ENCODE measurements at regions of chr12 and their contacts with region 1.

Region 1: DNA sequence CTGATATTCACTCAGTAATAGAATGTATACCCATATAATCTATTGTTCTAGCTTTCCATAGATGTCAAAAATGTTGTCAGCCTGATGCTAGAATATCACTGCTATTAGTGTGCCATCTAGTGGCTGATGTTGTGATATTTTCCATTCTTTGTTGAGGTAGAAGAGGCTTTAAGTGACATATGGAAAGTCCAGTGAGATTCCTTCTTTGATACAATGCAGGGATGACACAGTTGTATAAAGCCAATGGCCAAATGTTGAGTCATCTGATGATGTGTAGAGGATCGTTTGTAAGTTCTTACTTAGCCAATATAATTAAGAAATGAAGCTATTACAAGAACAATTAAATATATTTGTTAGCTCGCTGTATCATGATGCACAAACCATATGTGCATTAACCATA is 58.1 kb upstream of the PCED1B start:
- DNase-seq: peak; percentile 86
- H3K4me3 Mint-ChIP-seq: no peak overlapping the region
- H3K27ac Mint-ChIP-seq: no peak overlapping the region
- H3K4me1 Mint-ChIP-seq: peaks cover 34% of the 10 kb centered on the region
- H3K27me3 Mint-ChIP-seq: no peaks in the 10 kb centered on the region
- CTCF ChIP-seq: peak; percentile 57

Region 2: GRCh38 chr12:46071769-46072624 is 949.3 kb before region 1 on chr12:
- CTCF ChIA-PET with region 1: interaction called, 7 read pairs
- POLR2A ChIA-PET with region 1: interaction called, 3 read pairs
- intact Hi-C with region 1: loop called (anchors 1 kb)
- DNase-seq: peak; percentile 87
- H3K4me3 Mint-ChIP-seq: no peak overlapping the region
- H3K27ac Mint-ChIP-seq: peak overlapping the region; percentile 47
- H3K4me1 Mint-ChIP-seq: peaks cover 20% of the 10 kb centered on the region
- H3K27me3 Mint-ChIP-seq: no peaks in the 10 kb centered on the region
- CTCF ChIP-seq: peak; percentile 95

Region 3: DNA sequence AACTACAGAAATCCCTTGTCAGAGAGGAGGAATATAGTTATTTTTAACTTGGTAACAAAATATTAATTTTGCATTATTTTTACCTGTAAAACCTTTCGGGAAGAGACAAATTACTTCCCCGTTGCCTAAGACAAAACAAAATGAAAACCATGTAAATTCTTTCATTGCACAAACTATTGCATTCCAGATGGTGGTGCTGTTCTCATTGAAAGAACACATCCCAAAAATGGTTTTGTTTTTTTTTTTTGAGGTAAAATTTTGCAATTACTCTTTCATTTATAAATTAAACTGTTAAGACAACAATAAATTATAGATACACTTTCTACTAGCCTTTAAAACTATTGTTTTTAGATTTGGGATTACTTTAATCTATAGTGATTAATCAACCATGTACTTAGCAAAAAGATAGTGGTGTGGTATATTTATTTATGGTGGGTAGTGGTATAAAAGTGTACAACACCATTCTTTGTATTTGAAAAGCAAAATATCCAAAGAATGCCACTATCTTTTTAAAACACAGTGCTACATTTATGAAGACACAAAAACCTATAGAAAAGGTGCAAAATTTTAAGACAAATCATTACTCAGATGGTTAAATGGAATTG is 867.9 kb before region 1 on chr12:
- CTCF ChIA-PET with region 1: interaction called, 4 read pairs
- POLR2A ChIA-PET with region 1: no interaction called
- intact Hi-C with region 1: loop called (anchors 2 kb)
- DNase-seq: peak; percentile 46
- H3K4me3 Mint-ChIP-seq: no peak overlapping the region
- H3K27ac Mint-ChIP-seq: no peak overlapping the region
- H3K4me1 Mint-ChIP-seq: peaks cover 5% of the 10 kb centered on the region
- H3K27me3 Mint-ChIP-seq: no peaks in the 10 kb centered on the region
- CTCF ChIP-seq: peak; percentile 77

Region 4: DNA sequence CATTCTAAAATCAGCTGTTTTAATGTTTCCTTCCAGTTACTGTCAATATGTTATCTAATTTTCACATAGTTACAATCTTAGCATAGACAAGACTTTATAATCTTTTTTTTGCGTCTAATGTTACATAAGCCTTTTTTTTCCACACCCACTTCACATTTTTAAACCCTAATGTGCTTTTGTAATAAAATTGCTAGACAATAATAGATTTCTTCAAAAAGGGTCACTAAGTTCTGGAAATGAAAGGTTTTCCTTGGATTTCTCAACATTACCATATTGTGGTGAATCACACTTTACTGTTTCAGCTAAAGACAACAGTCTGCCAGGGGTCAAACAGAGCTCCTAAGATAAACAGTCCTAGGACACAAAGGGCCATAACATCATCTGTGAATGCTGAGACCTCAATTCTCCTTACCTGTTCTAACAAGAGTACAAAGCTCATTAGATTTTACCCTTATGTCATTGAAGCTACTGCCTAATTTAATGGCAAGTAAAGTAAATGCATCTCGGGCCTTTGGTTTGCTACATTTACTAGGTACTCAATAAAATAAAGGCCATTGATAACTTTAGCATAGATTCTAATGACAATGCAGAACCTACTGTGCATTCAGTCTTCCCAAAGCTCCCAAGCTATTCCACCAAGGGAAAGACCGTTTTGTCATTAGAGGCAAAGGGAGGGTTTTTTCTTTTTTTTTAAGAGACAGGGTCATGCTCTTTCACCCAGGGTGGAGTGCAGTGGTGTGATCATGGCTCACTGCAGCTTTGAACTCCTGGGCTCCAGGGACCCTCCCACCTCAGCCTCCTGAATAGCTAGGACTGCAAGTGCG is 537.5 kb before region 1 on chr12:
- CTCF ChIA-PET with region 1: no interaction called
- POLR2A ChIA-PET with region 1: no interaction called
- intact Hi-C with region 1: loop called (anchors 10 kb)
- DNase-seq: peak; percentile 73
- H3K4me3 Mint-ChIP-seq: no peak overlapping the region
- H3K27ac Mint-ChIP-seq: peak overlapping the region; percentile 57
- H3K4me1 Mint-ChIP-seq: peaks cover 9% of the 10 kb centered on the region
- H3K27me3 Mint-ChIP-seq: no peaks in the 10 kb centered on the region
- CTCF ChIP-seq: no peak

Region 5: DNA sequence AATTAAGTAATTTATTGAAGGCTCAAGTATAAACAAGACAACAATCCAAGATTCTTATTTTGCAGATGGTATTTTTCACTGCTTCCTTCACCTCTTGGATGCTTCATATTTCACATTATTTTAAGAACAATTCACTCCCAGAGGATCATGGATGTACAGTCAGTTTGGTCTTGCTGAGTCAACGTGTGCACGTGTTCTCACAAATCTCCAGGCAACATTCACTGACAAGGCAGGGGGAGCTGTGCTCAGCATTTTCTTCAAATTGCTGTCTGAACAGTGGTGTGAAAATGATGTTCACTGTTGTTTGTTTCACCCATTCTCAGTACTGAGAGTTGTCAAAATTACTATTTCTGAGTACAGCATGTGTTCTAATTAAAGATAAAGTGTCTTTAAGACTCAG is 77.2 kb before region 1 on chr12:
- CTCF ChIA-PET with region 1: interaction called, 40 read pairs
- POLR2A ChIA-PET with region 1: no interaction called
- intact Hi-C with region 1: loop called (anchors 1 kb)
- DNase-seq: peak; percentile 69
- H3K4me3 Mint-ChIP-seq: no peak overlapping the region
- H3K27ac Mint-ChIP-seq: no peak overlapping the region
- H3K4me1 Mint-ChIP-seq: peaks cover 6% of the 10 kb centered on the region
- H3K27me3 Mint-ChIP-seq: no peaks in the 10 kb centered on the region
- CTCF ChIP-seq: no peak

Region 6: DNA sequence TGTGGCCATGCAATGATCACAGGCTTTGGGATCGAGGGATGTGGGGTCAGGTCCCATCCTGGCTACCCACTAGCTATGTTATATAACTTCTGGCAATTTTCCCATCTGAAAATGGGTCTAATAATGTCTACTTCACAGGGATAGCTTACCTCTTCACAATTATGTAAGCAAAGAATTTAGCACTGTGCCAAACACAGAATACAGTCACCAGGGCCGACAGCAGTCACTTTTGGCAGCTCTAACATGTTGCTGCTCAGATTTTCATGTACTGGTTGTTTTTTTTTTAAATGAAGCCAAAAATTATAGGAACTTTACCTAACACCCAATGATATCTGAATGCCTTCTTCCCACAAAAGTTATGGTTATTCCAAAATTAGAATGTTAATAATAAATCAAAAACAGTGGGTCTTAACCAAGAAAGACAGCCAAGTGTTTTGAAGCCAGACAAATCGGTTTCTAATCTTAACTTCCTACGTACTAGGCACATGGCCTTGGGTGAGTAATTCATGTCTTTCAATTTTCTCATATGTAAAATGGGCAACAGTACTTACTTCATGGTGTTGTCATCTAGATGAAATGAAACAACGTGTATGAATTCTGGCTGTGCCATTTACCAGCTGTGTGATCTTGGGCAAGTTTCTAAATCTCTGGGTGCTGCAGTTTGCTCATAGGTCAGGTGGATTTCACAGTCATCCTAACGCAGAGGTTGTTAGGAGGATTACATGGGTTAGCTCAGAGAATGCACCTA is 45.2 kb after region 1 on chr12:
- CTCF ChIA-PET with region 1: no interaction called
- POLR2A ChIA-PET with region 1: no interaction called
- intact Hi-C with region 1: no loop called
- DNase-seq: no peak
- H3K4me3 Mint-ChIP-seq: no peak overlapping the region
- H3K27ac Mint-ChIP-seq: no peak overlapping the region
- H3K4me1 Mint-ChIP-seq: peaks cover 6% of the 10 kb centered on the region
- H3K27me3 Mint-ChIP-seq: no peaks in the 10 kb centered on the region
- CTCF ChIP-seq: no peak